Right lobe of liver (tissue), 6 donors: ENCODE measurements at regions of chr19 and their contacts with region 1.

Region 1: DNA sequence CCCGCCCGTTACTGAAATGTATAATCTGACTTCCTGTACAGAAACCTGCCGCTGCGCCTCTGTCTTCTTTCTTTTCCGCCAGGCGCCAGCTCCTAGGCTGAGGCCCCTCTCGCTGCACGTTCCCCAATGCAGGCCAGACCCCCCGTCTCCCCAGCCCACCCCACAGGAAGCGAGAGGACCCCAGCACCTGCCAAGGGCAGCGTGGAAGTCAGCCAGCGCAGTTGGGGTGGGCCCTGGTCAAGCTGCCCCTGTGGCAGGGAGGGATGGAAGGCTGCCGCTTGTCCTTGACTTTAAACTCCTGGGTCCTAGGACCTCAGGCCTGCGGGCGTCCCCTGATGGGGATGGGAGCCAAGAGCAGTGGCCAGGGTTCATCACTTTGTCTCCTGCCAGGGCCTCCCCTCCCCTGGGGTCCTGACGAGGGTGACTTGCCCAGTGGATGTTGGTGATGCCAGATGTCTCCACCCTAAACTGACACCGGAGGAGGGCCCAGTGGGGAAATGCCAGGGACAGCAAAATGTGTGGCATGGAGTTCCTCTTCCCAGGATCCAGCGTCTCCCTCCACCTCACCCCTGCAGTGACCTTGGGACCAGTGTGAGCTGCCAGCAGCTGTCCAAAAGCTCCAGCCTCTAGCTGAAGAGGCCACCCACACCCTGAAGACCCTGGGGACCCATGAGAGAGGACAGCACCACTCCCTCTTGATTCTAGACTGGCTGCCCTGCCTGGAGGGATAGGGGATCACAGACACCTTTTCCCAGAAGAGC is 8.5 kb upstream of the MARCHF2 start:
- DNase-seq: no peak
- ATAC-seq: peak; percentile 33 to 72 (median 44)
- H3K4me3 ChIP-seq: no peak overlapping the region
- H3K27ac ChIP-seq: no peak overlapping the region
- H3K4me1 ChIP-seq: peaks cover 0 to 5% (median 0%) of the 10 kb centered on the region in 4 donors
- H3K27me3 ChIP-seq: no peaks in the 10 kb centered on the region
- CTCF ChIP-seq: no peak
- POLR2A ChIP-seq: no peak

Region 2: DNA sequence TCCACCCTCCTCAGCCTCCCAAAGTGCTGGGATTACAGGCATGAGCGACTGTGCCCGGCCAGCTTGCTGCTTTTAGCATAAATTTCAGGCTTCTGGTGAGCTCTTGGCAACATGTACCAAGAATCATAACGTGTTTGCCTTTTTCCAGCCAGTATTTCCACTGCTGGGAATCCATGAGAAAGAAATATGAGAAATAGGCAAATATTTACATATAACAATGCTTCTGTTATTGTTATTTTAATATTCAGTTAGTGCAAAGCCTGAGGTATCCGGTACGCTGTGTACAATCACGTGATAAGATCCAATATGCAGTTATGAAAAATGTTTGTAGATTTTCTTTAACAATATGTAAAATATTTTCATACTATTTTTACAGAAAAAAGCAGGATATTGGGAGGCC is 224.5 kb before region 1 on chr19:
- intact Hi-C with region 1: no loop called
- DNase-seq: no peak
- ATAC-seq: no peak
- H3K4me3 ChIP-seq: no peak overlapping the region
- H3K27ac ChIP-seq: no peak overlapping the region
- H3K4me1 ChIP-seq: no peaks in the 10 kb centered on the region
- H3K27me3 ChIP-seq: no peaks in the 10 kb centered on the region
- CTCF ChIP-seq: no peak
- POLR2A ChIP-seq: no peak

Region 3: DNA sequence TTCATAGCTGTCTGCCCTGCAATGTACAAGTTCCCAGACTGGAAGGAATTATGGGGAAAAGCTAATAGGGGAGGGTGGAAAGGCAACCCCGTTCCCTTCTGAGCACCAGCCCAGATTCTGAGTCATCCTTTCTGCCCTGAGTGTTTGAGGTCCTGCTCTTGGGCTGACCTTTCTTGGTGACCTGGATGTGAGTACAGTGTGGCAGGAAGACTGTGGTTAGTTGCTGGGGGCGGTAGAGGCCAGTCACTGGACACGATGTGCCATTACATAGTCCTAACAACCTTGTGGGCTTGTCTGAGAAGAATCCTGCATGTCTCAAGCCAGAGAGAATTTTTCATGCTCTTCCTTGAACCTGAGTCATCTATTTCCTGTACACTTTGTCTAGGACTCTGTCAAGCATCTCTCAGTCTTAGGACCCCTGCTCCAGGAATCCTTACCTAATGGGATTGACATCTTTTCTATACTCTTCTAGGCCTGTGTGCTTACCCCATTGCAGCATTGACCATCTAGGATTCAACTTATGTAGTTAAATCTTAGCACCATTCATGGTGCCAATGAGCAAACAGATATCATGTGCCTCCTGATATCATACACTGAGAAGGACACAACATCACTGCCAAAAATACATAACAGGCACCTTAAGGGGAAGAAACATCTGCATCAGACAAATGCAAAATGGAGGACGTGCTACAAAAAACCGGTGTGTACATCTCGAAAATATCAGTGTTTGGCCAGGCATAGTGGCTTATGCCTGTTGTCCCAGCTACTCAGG is 48.8 kb before region 1 on chr19:
- intact Hi-C with region 1: loop called in 1 of 2 experiments (anchors 10 kb)
- DNase-seq: peak in 1 of 3 donors; percentile 57
- ATAC-seq: peak; percentile 56 to 78 (median 68)
- H3K4me3 ChIP-seq: no peak overlapping the region
- H3K27ac ChIP-seq: peak overlapping the region; percentile 11 to 79 (median 74)
- H3K4me1 ChIP-seq: peaks cover 0 to 36% (median 15%) of the 10 kb centered on the region in 4 donors
- H3K27me3 ChIP-seq: no peaks in the 10 kb centered on the region
- CTCF ChIP-seq: no peak
- POLR2A ChIP-seq: no peak

Region 4: GRCh38 chr19:8444645-8445487 is 40.3 kb after region 1 on chr19 and contains the start of gene HNRNPM:
- intact Hi-C with region 1: no loop called
- DNase-seq: peak; percentile 100
- ATAC-seq: peak; percentile 90 to 97 (median 94)
- H3K4me3 ChIP-seq: peak within 1 kb of the TSS; percentile 98 to 100 (median 99)
- H3K27ac ChIP-seq: peak within 1 kb of the TSS; percentile 95 to 97 (median 96)
- H3K4me1 ChIP-seq: peaks cover 0 to 35% (median 15%) of the 10 kb centered on the region in 4 donors
- H3K27me3 ChIP-seq: no peaks in the 10 kb centered on the region
- CTCF ChIP-seq: no peak
- POLR2A ChIP-seq: peak; percentile 92
- total RNA-seq, gene HNRNPM: 31.8 to 82.5 (median 58.6) TPM

Region 5: DNA sequence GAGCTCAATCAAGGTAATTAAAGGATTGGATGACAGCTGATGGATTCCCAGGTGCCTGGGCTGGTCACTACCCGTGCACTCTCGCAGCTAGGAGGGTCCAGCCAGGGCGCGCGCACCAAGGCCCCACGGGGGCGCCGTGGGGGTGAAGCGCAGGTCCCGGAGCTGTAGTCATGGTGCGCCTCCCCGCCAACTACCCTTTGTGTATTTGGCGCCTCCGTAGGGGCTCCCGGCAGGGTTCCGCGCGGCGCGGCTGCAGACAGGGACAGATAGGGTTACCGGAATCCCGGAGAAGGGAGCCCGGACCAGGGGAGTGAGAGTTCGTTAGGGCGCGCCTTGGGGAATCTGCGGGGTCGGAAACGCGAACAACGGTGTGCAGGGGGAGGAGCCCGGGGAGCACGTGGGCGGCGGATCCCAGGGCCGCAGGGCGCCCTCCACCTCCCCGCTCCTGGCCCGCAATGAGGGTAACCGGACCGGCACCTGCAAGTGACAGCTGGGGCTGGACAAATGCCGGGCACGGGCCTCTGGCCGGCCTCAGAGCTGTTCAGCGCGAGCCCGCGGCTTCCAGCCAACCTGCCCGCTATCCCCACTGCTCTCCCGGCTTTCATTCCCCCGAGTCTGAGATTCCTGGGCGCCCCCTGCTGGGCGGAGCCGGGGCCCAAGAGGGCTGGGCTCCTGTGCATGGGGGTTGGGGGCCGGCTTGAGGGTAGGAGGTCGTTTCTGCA is 101.3 kb after region 1 on chr19:
- intact Hi-C with region 1: loop called in 1 of 2 experiments (anchors 10 kb)
- DNase-seq: peak; percentile 84 to 90 (median 88)
- ATAC-seq: peak; percentile 88 to 93 (median 88)
- H3K4me3 ChIP-seq: peak overlapping the region; percentile 42 to 63 (median 54)
- H3K27ac ChIP-seq: no peak overlapping the region
- H3K4me1 ChIP-seq: peaks cover 0 to 6% (median 0%) of the 10 kb centered on the region in 4 donors
- H3K27me3 ChIP-seq: no peaks in the 10 kb centered on the region
- CTCF ChIP-seq: peak; percentile 84 to 93 (median 92)
- POLR2A ChIP-seq: peak; percentile 15

Region 6: GRCh38 chr19:8988204-8988603 is 583.6 kb after region 1 on chr19:
- intact Hi-C with region 1: no loop called
- DNase-seq: no peak
- ATAC-seq: no peak
- H3K4me3 ChIP-seq: no peak overlapping the region
- H3K27ac ChIP-seq: no peak overlapping the region
- H3K4me1 ChIP-seq: no peaks in the 10 kb centered on the region
- H3K27me3 ChIP-seq: no peaks in the 10 kb centered on the region
- CTCF ChIP-seq: no peak
- POLR2A ChIP-seq: no peak